ENCODE measurements at regions of chr14 and their contacts with region 1.

Region 1: GRCh38 chr14:49598485-49599300 is at the start of gene LRR1:
- DNase-seq: peak; percentile 69
- ATAC-seq: peak; percentile 75
- H3K4me3 ChIP-seq: peak within 1 kb of the TSS; percentile 94 to 99
- H3K27ac ChIP-seq: peak within 1 kb of the TSS; percentile 99
- H3K4me1 ChIP-seq: peaks cover 26 to 47% of the 10 kb centered on the region in 2 experiments
- H3K27me3 ChIP-seq: no peaks in the 10 kb centered on the region
- CTCF ChIP-seq: no peak
- POLR2A ChIP-seq: peak; percentile 62
- RAD21 ChIP-seq: no peak
- total RNA-seq, gene LRR1: 34.6 TPM

Region 2: DNA sequence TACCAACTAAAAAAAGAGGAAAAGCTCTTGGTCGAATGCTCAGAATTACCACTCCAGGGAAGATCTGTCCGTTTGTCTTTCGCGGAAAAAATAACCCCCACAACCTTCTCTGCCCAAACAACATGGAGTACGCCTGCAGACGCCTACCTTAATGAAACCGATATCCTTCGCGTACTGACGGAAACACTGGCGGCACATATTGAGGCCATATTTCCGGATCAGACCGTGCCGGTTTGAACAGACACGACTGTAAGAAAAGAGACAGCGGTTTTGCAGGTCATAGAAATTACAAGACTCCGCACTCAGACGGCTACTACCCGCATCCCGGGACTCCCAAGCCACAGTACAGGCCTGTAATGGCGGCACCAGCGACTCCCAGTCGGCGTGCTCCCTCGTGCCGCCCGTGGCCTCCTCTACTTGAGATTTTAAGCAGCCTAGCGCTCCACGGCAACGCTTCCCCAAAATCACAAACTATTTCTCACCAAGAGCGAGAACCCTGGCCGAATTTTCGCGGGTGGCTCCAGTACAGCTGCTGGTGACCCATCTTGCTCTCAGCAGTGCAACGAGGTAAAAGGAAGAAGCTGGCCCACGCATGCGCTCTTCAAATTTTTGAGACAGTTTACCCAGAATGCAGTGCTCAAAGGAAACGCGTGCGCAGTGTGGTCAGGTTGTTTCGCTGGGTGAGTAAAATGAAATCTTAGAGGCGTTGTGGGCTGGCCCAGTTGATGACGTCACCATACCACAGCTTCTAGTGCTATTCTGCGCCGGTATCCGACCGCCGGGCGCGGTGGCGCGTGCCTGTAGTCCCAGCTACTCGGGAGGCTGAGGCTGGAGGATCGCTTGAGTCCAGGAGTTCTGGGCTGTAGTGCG is 12.7 kb before region 1 on chr14 and contains the start of gene RPS29:
- CTCF ChIA-PET with region 1: interaction called, 16 read pairs
- POLR2A ChIA-PET with region 1: interaction called, 15 read pairs
- RAD21 ChIA-PET with region 1: no interaction called
- intact Hi-C with region 1: no loop called
- DNase-seq: peak; percentile 99
- ATAC-seq: peak; percentile 83
- H3K4me3 ChIP-seq: peak within 1 kb of the TSS; percentile 71 to 88
- H3K27ac ChIP-seq: peak within 1 kb of the TSS; percentile 81
- H3K4me1 ChIP-seq: peaks cover 12 to 49% of the 10 kb centered on the region in 2 experiments
- H3K27me3 ChIP-seq: no peaks in the 10 kb centered on the region
- CTCF ChIP-seq: no peak
- POLR2A ChIP-seq: peak; percentile 93
- RAD21 ChIP-seq: no peak
- total RNA-seq, gene RPS29: 1,825 TPM

Region 3: GRCh38 chr14:49620182-49621113 is 21.8 kb after region 1 on chr14 and contains the starts of genes MGAT2 and RPL36AL:
- CTCF ChIA-PET with region 1: interaction called, 3 read pairs
- POLR2A ChIA-PET with region 1: interaction called, 17 read pairs
- RAD21 ChIA-PET with region 1: no interaction called
- intact Hi-C with region 1: no loop called
- DNase-seq: peak; percentile 95
- ATAC-seq: peak; percentile 97
- H3K4me3 ChIP-seq: peak within 1 kb of the TSS; percentile 82 to 96
- H3K27ac ChIP-seq: peak within 1 kb of the TSS; percentile 86
- H3K4me1 ChIP-seq: peaks cover 8 to 41% of the 10 kb centered on the region in 2 experiments; a peak in 3 of 4 replicates
- H3K27me3 ChIP-seq: no peaks in the 10 kb centered on the region
- CTCF ChIP-seq: peak in 2 of 3 experiments; percentile 18 to 26; a peak in 1 of 6 replicates
- POLR2A ChIP-seq: peak; percentile 88
- RAD21 ChIP-seq: no peak
- total RNA-seq, gene MGAT2: 22.9 TPM
- total RNA-seq, gene RPL36AL: 212 TPM

Measured in HCT116 (cell line).